HepG2 (cell line): ENCODE measurements at regions of chrX and their contacts with region 1.

Region 1: DNA sequence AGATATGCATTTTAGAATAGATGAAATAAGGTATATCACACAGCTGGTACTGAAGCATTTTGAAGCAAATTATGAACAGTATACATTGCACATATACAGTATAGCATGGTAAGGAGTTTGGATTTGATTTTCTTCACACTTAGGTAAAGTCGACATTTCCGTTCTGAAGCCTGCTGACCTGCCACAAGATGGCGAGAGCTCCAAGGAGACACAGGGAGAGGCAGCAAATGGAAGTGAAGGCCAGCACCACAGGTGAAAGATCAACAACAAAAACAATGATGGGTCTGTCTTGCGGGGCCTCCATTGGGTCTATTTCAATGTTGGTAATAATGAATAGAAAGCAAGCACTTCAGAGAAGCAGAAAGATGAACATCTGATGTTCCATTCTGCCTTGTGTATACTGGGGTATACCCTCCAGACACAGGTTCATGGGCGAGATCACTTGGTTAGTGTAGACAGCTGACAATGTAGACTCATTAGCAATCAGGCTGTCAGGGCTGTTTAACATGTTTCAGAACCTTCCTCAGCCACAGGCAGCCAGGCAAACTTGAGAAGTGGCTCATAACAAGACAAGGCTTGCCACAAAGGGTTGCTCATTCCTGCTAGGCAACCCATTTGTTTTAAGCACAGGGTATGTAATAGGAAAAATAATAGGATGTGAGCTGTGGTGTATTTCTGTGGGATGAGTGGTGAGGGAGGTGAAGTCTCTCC is 21.4 kb upstream of the NOX1 start:
- DNase-seq: peak; percentile 55
- ATAC-seq: peak; percentile 86
- H3K4me3 ChIP-seq: no peak overlapping the region; a peak in 1 of 6 replicates
- H3K27ac ChIP-seq: no peak overlapping the region
- H3K4me1 ChIP-seq: peaks cover 6% of the 10 kb centered on the region
- H3K27me3 ChIP-seq: no peaks in the 10 kb centered on the region
- CTCF ChIP-seq: peak; percentile 78
- EP300 ChIP-seq: no peak
- POLR2A ChIP-seq: no peak
- RAD21 ChIP-seq: peak; percentile 42; the same call in 1 of the 2 replicates

Region 2: GRCh38 chrX:100946299-100946920 is 50.9 kb after region 1 on chrX:
- CTCF ChIA-PET with region 1: no interaction called
- POLR2A ChIA-PET with region 1: no interaction called
- in situ Hi-C with region 1: no loop called
- intact Hi-C with region 1: loop called (anchors 2 kb)
- DNase-seq: no peak
- ATAC-seq: no peak
- H3K4me3 ChIP-seq: no peak overlapping the region
- H3K27ac ChIP-seq: no peak overlapping the region
- H3K4me1 ChIP-seq: no peaks in the 10 kb centered on the region
- H3K27me3 ChIP-seq: no peaks in the 10 kb centered on the region
- CTCF ChIP-seq: no peak
- EP300 ChIP-seq: no peak
- POLR2A ChIP-seq: no peak
- RAD21 ChIP-seq: no peak

Region 3: GRCh38 chrX:100980605-100981497 is 85.3 kb after region 1 on chrX:
- CTCF ChIA-PET with region 1: no interaction called
- POLR2A ChIA-PET with region 1: no interaction called
- in situ Hi-C with region 1: no loop called
- intact Hi-C with region 1: no loop called
- DNase-seq: peak; percentile 39
- ATAC-seq: peak; percentile 76
- H3K4me3 ChIP-seq: no peak overlapping the region
- H3K27ac ChIP-seq: no peak overlapping the region
- H3K4me1 ChIP-seq: peaks cover 24% of the 10 kb centered on the region
- H3K27me3 ChIP-seq: no peaks in the 10 kb centered on the region
- CTCF ChIP-seq: no peak
- EP300 ChIP-seq: no peak
- POLR2A ChIP-seq: no peak
- RAD21 ChIP-seq: no peak

Region 4: DNA sequence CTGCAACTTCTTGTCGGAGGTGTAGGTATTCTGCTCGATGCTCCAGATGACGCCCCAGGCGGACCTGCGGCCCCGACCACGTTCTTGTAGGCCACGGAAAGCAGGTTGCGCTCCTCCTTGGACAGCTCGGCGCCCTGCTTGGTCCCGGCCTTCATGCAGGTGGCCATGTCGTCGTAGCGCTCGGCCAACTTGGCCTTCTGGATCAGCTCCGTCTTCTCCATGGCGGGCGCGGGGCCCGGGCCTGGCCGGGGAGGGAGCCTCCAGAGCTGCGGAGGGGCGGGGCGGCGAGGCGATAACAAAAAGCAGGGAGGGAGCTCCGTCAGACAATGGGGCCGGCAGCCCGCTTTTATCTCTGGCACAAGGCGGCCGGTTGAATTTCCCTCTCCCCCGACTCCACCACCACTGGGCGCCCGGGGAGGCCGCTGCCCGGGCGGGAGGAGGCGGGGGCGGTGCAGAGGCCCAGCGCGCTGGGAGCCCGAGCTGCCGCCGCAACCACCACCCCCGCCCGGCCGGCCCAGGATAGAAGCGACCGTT is 295.8 kb after region 1 on chrX:
- CTCF ChIA-PET with region 1: no interaction called
- POLR2A ChIA-PET with region 1: no interaction called
- in situ Hi-C with region 1: loop called (anchors 25 kb)
- intact Hi-C with region 1: no loop called
- DNase-seq: no peak
- ATAC-seq: peak; percentile 74
- H3K4me3 ChIP-seq: no peak overlapping the region
- H3K27ac ChIP-seq: no peak overlapping the region
- H3K4me1 ChIP-seq: peaks cover 12% of the 10 kb centered on the region; the same call in 1 of the 2 replicates
- H3K27me3 ChIP-seq: no peaks in the 10 kb centered on the region
- CTCF ChIP-seq: no peak
- EP300 ChIP-seq: no peak
- POLR2A ChIP-seq: no peak
- RAD21 ChIP-seq: no peak

Region 5: GRCh38 chrX:101206471-101206870 is 311.0 kb after region 1 on chrX:
- CTCF ChIA-PET with region 1: interaction called, 4 read pairs
- POLR2A ChIA-PET with region 1: no interaction called
- in situ Hi-C with region 1: no loop called
- intact Hi-C with region 1: loop called (anchors 1 kb)
- DNase-seq: peak; percentile 16
- ATAC-seq: peak; percentile 81
- H3K4me3 ChIP-seq: no peak overlapping the region
- H3K27ac ChIP-seq: no peak overlapping the region
- H3K4me1 ChIP-seq: no peaks in the 10 kb centered on the region
- H3K27me3 ChIP-seq: no peaks in the 10 kb centered on the region
- CTCF ChIP-seq: peak; percentile 49
- EP300 ChIP-seq: no peak
- POLR2A ChIP-seq: no peak
- RAD21 ChIP-seq: 0 out of 2 replicates have a peak, but pooled peaks have one; percentile 25

Region 6: GRCh38 chrX:101290789-101291607 is 395.5 kb after region 1 on chrX and contains the start of gene TAF7L:
- CTCF ChIA-PET with region 1: no interaction called
- POLR2A ChIA-PET with region 1: no interaction called
- in situ Hi-C with region 1: no loop called
- intact Hi-C with region 1: loop called (anchors 10 kb)
- DNase-seq: no peak
- ATAC-seq: no peak
- H3K4me3 ChIP-seq: no peak within 1 kb of the TSS
- H3K27ac ChIP-seq: no peak within 1 kb of the TSS
- H3K4me1 ChIP-seq: no peaks in the 10 kb centered on the region
- H3K27me3 ChIP-seq: no peaks in the 10 kb centered on the region
- CTCF ChIP-seq: no peak
- EP300 ChIP-seq: no peak
- POLR2A ChIP-seq: no peak
- RAD21 ChIP-seq: no peak
- total RNA-seq, gene TAF7L: not detected in 2 replicates